ENCODE measurements at regions of chr17 and their contacts with region 1.

Region 1: GRCh38 chr17:44522883-44523671 is 19.9 kb upstream of the GPATCH8 start:
- DNase-seq: peak; percentile 78 to 82
- H3K4me3 ChIP-seq: no peak overlapping the region
- H3K4me3 Mint-ChIP-seq: no peak overlapping the region
- H3K27ac Mint-ChIP-seq: no peak overlapping the region
- H3K4me1 ChIP-seq: no peaks in the 10 kb centered on the region
- H3K4me1 Mint-ChIP-seq: no peaks in the 10 kb centered on the region
- H3K27me3 ChIP-seq: no peaks in the 10 kb centered on the region
- H3K27me3 Mint-ChIP-seq: no peaks in the 10 kb centered on the region
- CTCF ChIP-seq: peak; percentile 59 to 74

Region 2: DNA sequence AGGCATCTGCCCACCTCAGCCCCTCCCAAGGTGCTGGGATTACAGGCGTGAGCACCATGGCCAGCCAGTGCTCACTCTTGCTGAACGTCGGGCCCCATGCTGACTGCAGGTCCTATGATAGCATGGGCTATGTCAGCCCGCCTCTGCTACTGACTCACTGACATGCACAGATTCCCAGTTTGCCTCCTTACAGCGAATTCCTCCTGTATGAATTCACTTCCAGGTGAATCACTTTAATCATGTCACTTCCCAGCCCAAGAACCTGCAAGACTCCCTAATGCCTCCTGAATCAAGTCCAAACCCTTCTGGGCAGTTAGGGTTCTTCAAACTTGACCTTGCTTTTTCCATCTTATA is 287.5 kb before region 1 on chr17:
- CTCF ChIA-PET with region 1: no interaction called
- POLR2A ChIA-PET with region 1: no interaction called
- intact Hi-C with region 1: no loop called
- DNase-seq: no peak
- H3K4me3 ChIP-seq: no peak overlapping the region
- H3K4me3 Mint-ChIP-seq: no peak overlapping the region
- H3K27ac Mint-ChIP-seq: no peak overlapping the region
- H3K4me1 ChIP-seq: no peaks in the 10 kb centered on the region
- H3K4me1 Mint-ChIP-seq: no peaks in the 10 kb centered on the region
- H3K27me3 ChIP-seq: no peaks in the 10 kb centered on the region
- H3K27me3 Mint-ChIP-seq: no peaks in the 10 kb centered on the region
- CTCF ChIP-seq: no peak

Region 3: DNA sequence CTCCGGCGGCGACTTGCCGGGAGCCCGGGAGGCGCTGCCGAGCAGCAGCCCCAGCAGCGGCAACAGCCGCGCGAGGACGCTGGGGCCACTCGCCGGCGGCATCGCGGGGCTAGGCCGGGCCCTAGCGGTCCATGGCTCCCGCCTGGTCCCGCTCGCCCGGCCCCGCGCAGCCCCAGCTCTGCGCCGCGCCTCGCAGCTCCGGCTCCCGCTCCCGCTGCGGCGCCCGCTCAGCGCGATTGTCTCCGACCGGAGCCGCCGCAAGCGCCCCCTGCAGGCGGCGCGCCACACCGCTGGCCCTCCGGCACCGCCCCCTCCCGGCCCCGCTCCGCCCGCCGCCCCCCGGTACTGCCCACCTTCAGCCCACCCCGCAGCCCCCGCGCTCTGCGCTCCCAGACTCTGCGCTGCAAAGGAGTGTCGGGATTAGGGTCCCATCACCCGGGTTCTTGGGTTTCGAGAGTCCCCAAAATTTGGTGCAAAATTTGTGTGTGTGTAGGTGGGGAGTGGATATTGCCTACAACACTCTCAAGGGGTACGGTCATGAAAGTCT is 159.4 kb before region 1 on chr17 and contains the start of gene FAM171A2:
- CTCF ChIA-PET with region 1: interaction called, 13 read pairs
- POLR2A ChIA-PET with region 1: no interaction called
- intact Hi-C with region 1: no loop called
- DNase-seq: peak; percentile 49 to 83
- H3K4me3 ChIP-seq: peak within 1 kb of the TSS; percentile 69
- H3K4me3 Mint-ChIP-seq: peak within 1 kb of the TSS; percentile 70
- H3K27ac Mint-ChIP-seq: no peak within 1 kb of the TSS
- H3K4me1 ChIP-seq: peaks cover 10% of the 10 kb centered on the region; the same call in 1 of the 2 replicates
- H3K4me1 Mint-ChIP-seq: peaks cover 17% of the 10 kb centered on the region
- H3K27me3 ChIP-seq: 0 out of 2 replicates have a peak, but pooled peaks cover 1% of the 10 kb centered on the region
- H3K27me3 Mint-ChIP-seq: peaks cover 10% of the 10 kb centered on the region
- CTCF ChIP-seq: peak; percentile 55 to 80
- total RNA-seq, gene FAM171A2: 3.0 and 3.6 TPM in 2 replicates

Region 4: DNA sequence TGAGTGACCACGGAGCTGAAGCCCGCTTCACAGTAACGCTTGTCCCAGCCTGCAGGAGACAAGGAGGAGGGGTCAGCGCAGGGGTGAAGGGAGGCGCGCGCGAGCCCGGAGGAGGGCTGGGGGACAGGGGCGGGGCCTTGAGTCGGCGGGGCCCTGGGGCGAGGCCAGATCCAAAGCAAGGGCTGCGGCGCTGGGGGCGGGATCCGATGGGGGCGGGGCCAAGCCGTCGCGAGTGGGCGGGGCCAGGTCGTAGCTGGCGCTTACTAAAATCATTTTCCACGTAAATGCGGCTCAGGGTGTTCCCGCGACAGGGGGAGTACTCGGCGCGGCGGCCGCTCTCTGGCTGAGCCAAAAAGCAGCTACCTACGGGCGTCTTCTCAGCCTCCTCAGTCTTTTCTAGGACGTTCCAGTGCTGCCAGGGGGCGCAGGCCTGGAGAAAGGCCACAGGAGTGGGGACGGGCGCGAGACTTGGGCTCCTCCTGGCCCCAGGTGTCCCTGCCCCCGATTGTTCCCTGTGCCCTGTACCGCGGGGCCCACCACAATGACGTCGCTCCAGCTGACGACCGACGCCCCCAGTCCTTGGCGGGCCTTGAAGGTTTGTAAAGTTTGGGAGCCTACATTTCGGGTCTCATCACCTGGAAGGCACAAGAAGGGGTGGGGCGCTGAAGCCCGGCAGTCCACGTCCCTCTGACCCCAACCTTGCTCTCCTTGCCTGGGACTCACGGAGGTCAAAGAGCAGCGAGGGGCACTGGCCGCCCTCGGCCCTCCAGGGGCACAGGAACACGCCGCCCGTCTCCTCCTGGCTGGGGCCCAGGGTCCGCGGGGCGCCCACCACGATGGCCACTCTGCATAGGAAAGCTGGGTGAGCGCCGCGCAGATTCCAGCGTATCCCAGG is 137.5 kb before region 1 on chr17:
- CTCF ChIA-PET with region 1: interaction called, 10 read pairs
- POLR2A ChIA-PET with region 1: no interaction called
- intact Hi-C with region 1: no loop called
- DNase-seq: peak; percentile 94
- H3K4me3 ChIP-seq: peak overlapping the region; percentile 58
- H3K4me3 Mint-ChIP-seq: peak overlapping the region; percentile 73
- H3K27ac Mint-ChIP-seq: peak overlapping the region; percentile 59
- H3K4me1 ChIP-seq: 0 out of 2 replicates have a peak, but pooled peaks cover under 1% of the 10 kb centered on the region
- H3K4me1 Mint-ChIP-seq: no peaks in the 10 kb centered on the region
- H3K27me3 ChIP-seq: no peaks in the 10 kb centered on the region
- H3K27me3 Mint-ChIP-seq: peaks cover 5% of the 10 kb centered on the region
- CTCF ChIP-seq: peak; percentile 41 to 44

Region 5: GRCh38 chr17:44400226-44400847 is 122.7 kb before region 1 on chr17:
- CTCF ChIA-PET with region 1: interaction called, 3 read pairs
- POLR2A ChIA-PET with region 1: no interaction called
- intact Hi-C with region 1: loop called (anchors 2 kb)
- DNase-seq: peak in 1 of 2 experiments; percentile 37
- H3K4me3 ChIP-seq: no peak overlapping the region
- H3K4me3 Mint-ChIP-seq: no peak overlapping the region
- H3K27ac Mint-ChIP-seq: peak overlapping the region; percentile 40
- H3K4me1 ChIP-seq: no peaks in the 10 kb centered on the region
- H3K4me1 Mint-ChIP-seq: no peaks in the 10 kb centered on the region
- H3K27me3 ChIP-seq: no peaks in the 10 kb centered on the region
- H3K27me3 Mint-ChIP-seq: no peaks in the 10 kb centered on the region
- CTCF ChIP-seq: peak; percentile 48 to 58

Region 6: DNA sequence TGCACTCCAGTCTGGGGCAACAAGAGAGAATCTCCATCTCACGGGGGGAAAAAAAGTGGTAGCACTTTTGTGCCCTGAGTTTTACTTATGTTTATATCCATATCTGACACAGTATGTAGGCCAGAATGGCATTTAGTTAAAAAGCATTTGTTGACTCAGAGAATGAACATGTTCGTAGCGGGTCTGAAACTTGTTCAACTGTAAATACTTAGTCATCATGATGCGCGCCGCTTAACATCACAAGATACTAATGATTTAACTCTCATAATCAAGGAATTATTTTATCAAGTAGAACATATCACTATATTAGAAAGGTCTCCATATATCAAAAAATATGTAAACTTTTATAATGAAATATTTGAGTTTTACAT is 78.4 kb before region 1 on chr17:
- CTCF ChIA-PET with region 1: no interaction called
- POLR2A ChIA-PET with region 1: no interaction called
- intact Hi-C with region 1: loop called (anchors 1 kb)
- DNase-seq: no peak
- H3K4me3 ChIP-seq: no peak overlapping the region
- H3K4me3 Mint-ChIP-seq: no peak overlapping the region
- H3K27ac Mint-ChIP-seq: no peak overlapping the region
- H3K4me1 ChIP-seq: no peaks in the 10 kb centered on the region
- H3K4me1 Mint-ChIP-seq: no peaks in the 10 kb centered on the region
- H3K27me3 ChIP-seq: no peaks in the 10 kb centered on the region
- H3K27me3 Mint-ChIP-seq: no peaks in the 10 kb centered on the region
- CTCF ChIP-seq: no peak

Region 7: GRCh38 chr17:44614862-44615261 is 91.8 kb after region 1 on chr17:
- CTCF ChIA-PET with region 1: no interaction called
- POLR2A ChIA-PET with region 1: no interaction called
- intact Hi-C with region 1: no loop called
- DNase-seq: no peak
- H3K4me3 ChIP-seq: no peak overlapping the region
- H3K4me3 Mint-ChIP-seq: no peak overlapping the region
- H3K27ac Mint-ChIP-seq: no peak overlapping the region
- H3K4me1 ChIP-seq: peaks cover 17% of the 10 kb centered on the region
- H3K4me1 Mint-ChIP-seq: peaks cover 14% of the 10 kb centered on the region
- H3K27me3 ChIP-seq: no peaks in the 10 kb centered on the region
- H3K27me3 Mint-ChIP-seq: no peaks in the 10 kb centered on the region
- CTCF ChIP-seq: no peak

Measured in Caco-2 (cell line).